ENCODE measurements at regions of chr9 and their contacts with region 1.

Region 1: DNA sequence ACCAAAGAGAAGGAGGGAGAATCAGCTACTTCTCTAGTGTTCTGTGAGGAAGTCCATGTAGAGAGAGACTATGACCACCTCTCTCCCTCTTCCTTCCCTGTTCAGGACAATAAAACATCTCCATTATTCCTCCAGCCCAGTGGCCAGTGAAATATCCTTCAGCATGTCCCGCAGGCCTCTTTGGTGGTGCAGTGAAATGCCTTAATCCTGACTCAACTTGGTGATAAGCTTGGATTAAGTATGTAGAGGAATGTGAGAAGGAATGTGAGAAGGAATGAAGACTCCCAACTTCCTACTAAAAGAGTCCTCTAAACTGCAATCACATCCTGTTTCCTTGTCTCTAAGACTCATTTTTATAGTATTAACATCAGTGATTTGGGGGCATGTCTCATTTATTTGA is 167.3 kb downstream of the TRPM3 start:
- DNase-seq: no peak
- ATAC-seq: peak in 1 of 4 donors; percentile 31
- H3K4me3 ChIP-seq: no peak overlapping the region
- H3K27ac ChIP-seq: no peak overlapping the region
- H3K4me1 ChIP-seq: peaks cover 0 to 4% (median 0%) of the 10 kb centered on the region in 12 donors
- H3K27me3 ChIP-seq: no peaks in the 10 kb centered on the region
- CTCF ChIP-seq: no peak
- POLR2A ChIP-seq: no peak

Region 2: DNA sequence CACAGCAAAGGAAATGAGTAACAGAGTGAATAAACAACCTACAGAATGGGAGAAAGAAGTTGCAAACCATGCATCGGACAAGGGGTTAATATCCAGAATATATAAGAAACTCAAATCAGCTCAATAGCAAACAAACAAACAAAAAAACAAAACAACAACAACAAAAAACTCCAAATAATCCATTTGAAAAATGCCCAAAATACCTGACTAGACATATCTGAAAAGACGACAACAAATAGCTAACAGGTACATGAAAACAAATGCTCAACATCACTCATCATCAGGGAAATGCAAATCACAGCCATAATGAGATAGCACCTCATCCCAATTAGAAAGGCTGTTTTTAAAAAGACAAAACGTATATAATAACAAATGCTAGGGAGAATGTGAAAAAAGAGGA is 56.1 kb after region 1 on chr9:
- intact Hi-C with region 1: loop called in 1 of 10 experiments (anchors 10 kb)
- DNase-seq: no peak
- ATAC-seq: no peak
- H3K4me3 ChIP-seq: no peak overlapping the region
- H3K27ac ChIP-seq: no peak overlapping the region
- H3K4me1 ChIP-seq: no peaks in the 10 kb centered on the region
- H3K27me3 ChIP-seq: no peaks in the 10 kb centered on the region
- CTCF ChIP-seq: no peak
- POLR2A ChIP-seq: no peak

Region 3: GRCh38 chr9:71036501-71036900 is 82.4 kb after region 1 on chr9:
- intact Hi-C with region 1: no loop called
- DNase-seq: no peak
- ATAC-seq: no peak
- H3K4me3 ChIP-seq: no peak overlapping the region
- H3K27ac ChIP-seq: no peak overlapping the region
- H3K4me1 ChIP-seq: no peaks in the 10 kb centered on the region
- H3K27me3 ChIP-seq: no peaks in the 10 kb centered on the region
- CTCF ChIP-seq: no peak
- POLR2A ChIP-seq: no peak

Region 4: GRCh38 chr9:71115448-71115975 is 161.4 kb after region 1 on chr9:
- intact Hi-C with region 1: no loop called
- DNase-seq: no peak
- ATAC-seq: no peak
- H3K4me3 ChIP-seq: no peak overlapping the region
- H3K27ac ChIP-seq: no peak overlapping the region
- H3K4me1 ChIP-seq: no peaks in the 10 kb centered on the region
- H3K27me3 ChIP-seq: peaks cover 0 to 11% (median 0%) of the 10 kb centered on the region in 9 donors
- CTCF ChIP-seq: no peak
- POLR2A ChIP-seq: no peak